ENCODE measurements at regions of chr3 and their contacts with region 1.

Region 1: GRCh38 chr3:35596335-35596995 is 42.9 kb upstream of the ARPP21 start:
- DNase-seq: peak in 2 of 10 donors; percentile 24 to 30
- H3K4me3 ChIP-seq: no peak overlapping the region
- H3K27ac ChIP-seq: peak overlapping the region in 7 of 59 donors; percentile 7 to 67 (median 22)
- H3K27me3 ChIP-seq: no peaks in the 10 kb centered on the region
- CTCF ChIP-seq: peak in 1 of 56 donors; percentile 20

Region 2: DNA sequence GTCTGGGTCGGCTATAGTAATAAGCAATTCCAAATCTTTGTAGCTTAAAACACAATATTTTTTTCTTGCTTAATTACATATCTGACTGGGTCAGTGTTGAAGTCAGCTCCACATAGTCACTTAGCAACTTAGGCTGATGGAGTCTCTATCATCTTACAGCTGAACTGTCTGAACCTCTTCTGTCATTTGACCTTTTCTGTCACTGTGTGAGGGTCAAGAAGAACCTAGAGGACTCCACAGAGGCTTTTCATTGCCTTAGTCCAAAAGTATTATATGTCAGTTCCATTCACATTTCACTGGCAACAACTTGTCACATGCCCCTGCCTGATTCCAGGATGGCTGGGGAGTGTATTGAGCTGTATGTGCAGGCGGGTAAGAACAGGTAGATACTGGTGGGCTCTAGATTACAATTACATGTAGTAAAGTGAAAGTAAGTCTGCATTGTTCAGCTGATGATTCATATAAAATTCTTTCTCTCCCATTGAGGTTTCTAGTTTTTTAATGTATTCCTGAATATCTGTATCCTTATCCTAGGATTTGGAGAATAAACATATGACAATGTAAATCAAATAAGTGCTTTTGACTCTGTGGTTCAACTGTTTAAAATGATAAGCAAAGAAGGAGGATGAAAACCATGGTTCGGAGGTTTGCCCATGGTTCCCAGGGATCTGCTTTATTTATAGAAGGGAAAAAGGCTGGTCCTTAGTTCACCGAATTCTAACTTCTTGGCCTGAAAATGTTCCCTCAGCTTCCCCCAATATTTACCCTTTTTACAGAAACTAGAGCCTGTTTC is 37.1 kb after region 1 on chr3:
- intact Hi-C with region 1: loop called (anchors 2 to 5 kb)
- DNase-seq: no peak
- H3K4me3 ChIP-seq: no peak overlapping the region
- H3K27ac ChIP-seq: peak overlapping the region in 2 of 59 donors; percentile 20
- H3K27me3 ChIP-seq: no peaks in the 10 kb centered on the region
- CTCF ChIP-seq: no peak

Region 3: DNA sequence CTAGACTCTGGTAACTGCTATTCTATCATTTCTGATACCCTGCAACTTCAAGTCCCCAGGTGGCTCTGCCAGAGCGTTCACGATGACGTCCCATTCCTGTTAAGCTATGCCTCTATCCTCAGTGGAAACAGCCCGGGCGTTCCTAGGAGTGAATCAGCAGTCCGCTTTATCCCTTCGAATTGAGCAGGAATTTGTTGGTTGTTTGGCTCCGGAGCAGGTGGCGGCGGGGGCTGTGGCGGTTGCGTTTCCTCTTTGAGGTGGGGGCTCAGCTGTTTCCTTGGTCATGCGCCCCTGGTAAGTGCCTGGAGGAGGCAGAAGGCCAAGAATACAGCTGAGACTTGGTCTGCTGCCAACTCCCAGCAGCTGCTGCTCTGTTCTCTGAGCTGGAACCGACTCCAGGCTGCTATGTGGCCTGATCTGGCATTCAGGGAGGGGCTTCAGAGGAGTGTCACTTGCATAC is 68.0 kb after region 1 on chr3:
- intact Hi-C with region 1: loop called in 1 of 2 experiments (anchors 1 kb)
- DNase-seq: peak; percentile 68 to 89 (median 84)
- H3K4me3 ChIP-seq: peak overlapping the region; percentile 5 to 65 (median 48)
- H3K27ac ChIP-seq: peak overlapping the region in 57 of 59 donors; percentile 15 to 92 (median 80)
- H3K27me3 ChIP-seq: no peaks in the 10 kb centered on the region
- CTCF ChIP-seq: peak in 4 of 56 donors; percentile 10 to 21 (median 11)